HEK293 (cell line): ENCODE measurements at regions of chr17 and their contacts with region 1.

Region 1: DNA sequence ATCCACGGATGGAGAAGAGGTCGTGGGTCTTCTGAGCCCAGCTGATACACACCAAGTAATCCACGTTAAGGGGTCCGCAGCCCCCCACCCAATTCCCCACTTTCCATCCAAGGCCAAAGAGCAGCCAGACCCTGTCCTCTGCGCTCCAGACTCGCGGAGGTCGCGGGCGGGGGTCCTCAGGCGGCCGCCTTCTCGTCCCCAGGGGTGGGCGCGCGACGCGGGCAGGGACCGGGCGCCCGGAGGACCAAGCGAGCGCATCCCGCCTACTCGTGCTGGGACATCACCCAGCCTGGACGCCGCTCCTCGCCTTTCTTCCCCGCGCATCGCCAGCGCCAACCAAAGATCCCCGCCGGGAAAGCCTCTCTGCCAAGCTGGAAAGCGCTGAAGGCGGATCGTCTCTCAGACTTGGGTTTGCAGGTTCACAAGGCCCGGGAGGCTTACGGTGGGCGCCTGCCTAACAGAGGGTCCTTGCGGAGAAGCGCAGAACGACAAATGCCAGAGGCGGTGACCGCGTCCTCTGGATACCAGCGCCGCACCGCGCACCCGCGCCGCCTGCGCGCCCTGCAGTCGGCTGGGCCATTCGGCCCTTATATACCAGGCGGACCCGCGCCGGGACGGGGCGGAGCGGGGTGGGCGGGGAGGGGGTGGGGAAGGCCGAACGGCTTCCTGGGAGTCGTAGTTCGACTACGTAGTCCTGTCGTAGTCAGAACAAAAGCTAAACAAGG is 471.6 kb downstream of the SOX9 start:
- H3K4me3 ChIP-seq: peak overlapping the region; percentile 85
- H3K27ac ChIP-seq: peak overlapping the region; percentile 75
- H3K4me1 ChIP-seq: peaks cover 8% of the 10 kb centered on the region; the same call in 1 of the 2 replicates
- CTCF ChIP-seq: peak; percentile 65

Region 2: GRCh38 chr17:72556944-72557826 is 35.2 kb before region 1 on chr17:
- CTCF ChIA-PET with region 1: interaction called, 20 read pairs
- POLR2A ChIA-PET with region 1: interaction called, 11 read pairs
- H3K4me3 ChIP-seq: no peak overlapping the region
- H3K27ac ChIP-seq: no peak overlapping the region
- H3K4me1 ChIP-seq: no peaks in the 10 kb centered on the region
- CTCF ChIP-seq: peak; percentile 75

Region 3: GRCh38 chr17:72602517-72603419 is 10.4 kb after region 1 on chr17:
- CTCF ChIA-PET with region 1: interaction called, 4 read pairs
- POLR2A ChIA-PET with region 1: interaction called, 33 read pairs
- H3K4me3 ChIP-seq: no peak overlapping the region
- H3K27ac ChIP-seq: no peak overlapping the region
- H3K4me1 ChIP-seq: no peaks in the 10 kb centered on the region
- CTCF ChIP-seq: no peak

Region 4: GRCh38 chr17:72683506-72684404 is 91.4 kb after region 1 on chr17:
- CTCF ChIA-PET with region 1: interaction called, 4 read pairs
- POLR2A ChIA-PET with region 1: interaction called, 18 read pairs
- H3K4me3 ChIP-seq: no peak overlapping the region
- H3K27ac ChIP-seq: peak overlapping the region; percentile 86
- H3K4me1 ChIP-seq: peaks cover 26% of the 10 kb centered on the region
- CTCF ChIP-seq: no peak

Region 5: GRCh38 chr17:72715906-72716572 is 123.6 kb after region 1 on chr17:
- CTCF ChIA-PET with region 1: no interaction called
- POLR2A ChIA-PET with region 1: interaction called, 11 read pairs
- H3K4me3 ChIP-seq: no peak overlapping the region
- H3K27ac ChIP-seq: no peak overlapping the region
- H3K4me1 ChIP-seq: 0 out of 2 replicates have a peak, but pooled peaks cover 3% of the 10 kb centered on the region
- CTCF ChIP-seq: no peak